ENCODE measurements at regions of chr1 and their contacts with region 1.

Region 1: DNA sequence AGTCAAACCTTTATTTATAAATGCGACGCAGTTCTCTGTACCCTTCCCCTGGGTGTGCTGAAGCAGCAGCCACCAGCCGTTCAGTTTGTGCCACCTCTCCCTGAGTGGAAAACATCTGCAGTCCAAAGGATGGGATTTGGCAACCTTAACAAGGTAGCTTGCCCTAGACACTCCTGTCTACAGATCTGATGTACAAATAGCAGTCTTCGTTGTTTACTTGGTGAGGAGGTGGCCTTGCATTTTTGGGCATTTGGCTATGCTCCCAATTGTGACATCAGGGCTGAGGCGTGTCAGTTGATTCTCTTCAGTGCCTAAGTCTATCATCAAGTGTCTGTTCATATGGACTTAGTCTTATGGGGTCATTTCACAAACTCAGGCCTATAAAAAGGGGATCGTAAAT is 59.8 kb downstream of the KDM1A start:
- ATAC-seq: no peak
- H3K4me3 ChIP-seq: no peak overlapping the region
- H3K27ac ChIP-seq: no peak overlapping the region
- H3K4me1 ChIP-seq: no peaks in the 10 kb centered on the region

Region 2: GRCh38 chr1:22983934-22984333 is 95.1 kb before region 1 on chr1:
- in situ Hi-C with region 1: loop called in 1 of 9 experiments (anchors 10 kb)
- ATAC-seq: no peak
- H3K4me3 ChIP-seq: no peak overlapping the region
- H3K27ac ChIP-seq: no peak overlapping the region
- H3K4me1 ChIP-seq: peaks cover 0 to 3% of the 10 kb centered on the region in 2 donors

Region 3: DNA sequence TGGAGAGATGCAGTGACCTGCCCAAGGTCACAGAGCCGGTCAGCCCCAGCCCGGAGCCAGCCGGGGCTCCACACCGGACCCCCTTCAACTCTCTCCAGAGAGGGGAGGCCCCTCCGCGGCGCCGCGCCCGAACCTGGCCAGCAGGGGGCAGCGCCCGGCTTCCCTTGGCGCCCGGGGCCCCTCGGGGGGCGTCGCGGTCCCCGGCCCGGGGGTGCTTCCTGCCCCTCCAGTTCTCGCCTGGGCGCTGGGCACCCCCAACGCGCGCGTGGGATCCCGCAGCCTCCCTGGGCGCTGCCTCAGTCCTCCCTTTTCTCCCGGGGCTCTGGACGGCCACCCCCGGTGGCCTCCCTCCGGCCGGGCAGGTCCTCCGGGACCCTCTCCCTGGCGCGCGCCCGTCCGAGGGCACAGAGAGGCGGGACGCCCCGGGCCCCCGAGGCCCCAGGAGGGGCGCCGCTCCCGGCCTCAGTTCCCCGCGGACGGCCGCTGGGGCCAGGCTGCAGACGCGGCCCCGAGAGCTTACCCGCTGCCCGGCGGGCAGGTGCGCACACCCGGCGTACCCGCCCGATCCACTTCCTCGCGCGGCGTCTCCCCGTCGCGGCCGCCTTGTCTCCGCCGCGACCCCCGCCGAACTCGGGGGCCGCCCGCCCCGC is 137.9 kb after region 1 on chr1:
- in situ Hi-C with region 1: no loop called
- ATAC-seq: peak; percentile 29 to 75 (median 64)
- H3K4me3 ChIP-seq: peak overlapping the region; percentile 39 to 69 (median 53)
- H3K27ac ChIP-seq: peak overlapping the region in 1 of 2 donors; percentile 76
- H3K4me1 ChIP-seq: peaks cover 0 to 22% of the 10 kb centered on the region in 2 donors

Region 4: DNA sequence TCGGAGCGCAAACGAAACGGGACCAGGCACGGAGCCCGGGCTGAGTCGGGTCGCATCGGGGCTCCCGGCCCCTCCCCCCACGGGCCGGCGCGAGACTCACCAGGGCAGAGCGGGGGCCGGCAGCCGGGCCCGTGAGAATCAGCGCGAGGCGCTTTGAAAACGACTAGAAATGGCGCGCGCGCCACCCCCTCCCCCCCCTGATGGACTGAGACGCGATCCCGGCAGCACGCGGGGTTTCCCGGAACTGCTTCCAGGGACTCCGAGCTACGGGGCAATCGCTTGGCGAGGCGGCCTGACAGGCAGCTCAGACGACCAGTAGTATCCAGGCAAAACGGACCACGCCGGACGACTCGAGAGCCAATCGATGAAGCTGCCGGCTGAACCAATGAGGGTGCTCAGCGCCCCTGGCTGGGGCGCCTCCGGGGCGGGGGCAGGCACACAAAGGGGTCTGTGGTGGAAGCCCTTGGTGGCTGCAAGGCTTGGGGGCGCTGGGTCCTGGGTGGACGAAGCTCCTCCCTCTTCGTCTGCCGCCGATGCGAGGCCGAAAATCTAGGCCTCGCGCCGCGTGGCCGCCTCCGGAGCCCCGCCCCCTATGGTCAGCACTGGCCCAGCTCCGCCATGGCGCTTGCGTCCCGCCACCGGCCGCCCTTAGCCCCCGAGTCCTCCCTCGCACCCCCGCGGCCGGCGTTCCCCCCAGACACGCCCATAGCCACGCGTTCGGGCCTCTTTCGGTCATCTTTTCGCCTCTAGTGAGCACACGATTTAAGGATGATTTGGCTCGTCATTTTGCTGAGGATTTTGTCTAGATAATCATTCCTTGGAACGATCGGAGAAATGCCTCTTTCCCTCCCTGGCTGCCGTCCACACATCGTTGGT is 265.3 kb after region 1 on chr1 and contains the start of gene HNRNPR:
- in situ Hi-C with region 1: no loop called
- ATAC-seq: peak; percentile 90 to 96 (median 95)
- H3K4me3 ChIP-seq: peak within 1 kb of the TSS; percentile 73 to 96 (median 79)
- H3K27ac ChIP-seq: peak within 1 kb of the TSS; percentile 97 to 98
- H3K4me1 ChIP-seq: peaks cover 18 to 21% of the 10 kb centered on the region in 2 donors
- total RNA-seq, gene HNRNPR: 68.9 to 317 (median 180) TPM